AG04449 (cell line): ENCODE measurements at regions of chr1 and their contacts with region 1.

Region 1: GRCh38 chr1:170967042-170967910 is 31.9 kb downstream of the MROH9 start:
- DNase-seq: peak; percentile 14
- H3K4me3 ChIP-seq: no peak overlapping the region
- CTCF ChIP-seq: peak; percentile 49

Region 2: DNA sequence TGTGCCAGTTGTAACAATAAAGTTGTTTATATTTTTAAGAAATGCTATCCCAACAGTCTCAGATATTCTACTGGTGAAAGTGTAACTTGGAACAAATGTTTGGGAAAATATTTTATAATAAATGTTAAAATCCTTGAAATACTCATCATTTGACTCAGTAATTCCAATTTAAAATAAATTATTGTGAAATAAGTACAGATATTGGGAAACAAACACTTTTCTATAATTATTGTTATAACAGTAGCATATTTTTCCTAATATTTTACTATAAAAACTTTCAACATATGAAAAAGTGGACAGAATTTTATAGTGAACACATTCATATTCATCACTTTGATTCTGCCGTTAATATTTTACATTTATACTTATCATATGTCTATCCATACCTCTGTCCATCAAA is 104.6 kb before region 1 on chr1:
- CTCF ChIA-PET with region 1: no interaction called
- POLR2A ChIA-PET with region 1: no interaction called
- DNase-seq: no peak
- H3K4me3 ChIP-seq: no peak overlapping the region
- CTCF ChIP-seq: no peak

Region 3: GRCh38 chr1:170939476-170939875 is 27.8 kb before region 1 on chr1:
- CTCF ChIA-PET with region 1: interaction called, 10 read pairs
- POLR2A ChIA-PET with region 1: no interaction called
- DNase-seq: no peak
- H3K4me3 ChIP-seq: no peak overlapping the region
- CTCF ChIP-seq: no peak

Region 4: GRCh38 chr1:170978371-170978910 is 11.2 kb after region 1 on chr1:
- CTCF ChIA-PET with region 1: interaction called, 17 read pairs
- POLR2A ChIA-PET with region 1: no interaction called
- DNase-seq: no peak
- H3K4me3 ChIP-seq: no peak overlapping the region
- CTCF ChIP-seq: no peak

Region 5: DNA sequence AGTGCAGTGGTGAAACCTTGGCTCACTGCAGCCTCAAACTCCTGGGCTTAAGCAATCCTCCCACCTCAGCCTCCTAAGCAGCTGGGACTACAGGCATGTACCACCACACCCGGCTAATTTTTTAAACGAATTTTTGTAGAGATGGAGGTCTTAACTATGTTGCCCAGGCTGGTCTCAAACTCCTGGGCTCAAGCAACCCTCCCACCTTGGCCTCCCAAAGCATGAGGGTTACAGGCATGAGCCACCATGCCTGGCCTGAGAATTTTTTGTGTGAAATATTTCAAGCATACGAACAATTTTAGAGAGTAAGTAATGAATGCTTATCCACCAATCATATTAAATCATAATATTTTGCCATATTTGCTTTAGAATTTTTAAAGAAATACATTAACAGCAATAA is 19.6 kb after region 1 on chr1:
- CTCF ChIA-PET with region 1: interaction called, 25 read pairs
- POLR2A ChIA-PET with region 1: no interaction called
- DNase-seq: no peak
- H3K4me3 ChIP-seq: no peak overlapping the region
- CTCF ChIP-seq: no peak

Region 6: DNA sequence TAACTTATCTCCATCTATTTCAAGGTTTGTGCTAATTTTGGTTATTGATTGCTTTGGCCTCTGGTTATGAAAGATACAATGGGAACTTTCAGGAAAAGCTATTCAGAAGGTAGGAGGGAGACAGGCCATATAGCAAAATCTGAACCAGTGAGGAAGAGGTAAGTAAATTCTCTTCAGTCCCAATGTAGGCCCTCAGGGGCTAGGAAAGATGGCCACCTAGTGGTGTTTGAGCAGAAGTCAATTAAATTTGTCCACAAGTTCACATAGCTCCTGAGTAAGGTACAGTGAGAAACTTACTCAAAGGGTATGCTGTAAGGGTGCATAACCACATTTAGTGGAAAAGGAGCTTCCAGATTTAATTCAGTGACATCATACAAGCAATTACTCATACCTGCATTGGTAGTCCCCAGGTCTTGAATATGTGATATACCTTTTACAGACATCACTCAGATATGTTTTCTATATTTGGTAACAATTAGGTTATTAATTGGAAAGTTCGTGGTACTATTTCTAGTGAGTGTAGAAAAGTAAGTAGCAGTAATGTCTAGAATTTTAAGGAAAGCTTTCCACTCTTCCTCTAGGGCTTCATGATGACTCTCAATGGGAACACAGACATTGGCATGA is 259.6 kb after region 1 on chr1:
- CTCF ChIA-PET with region 1: interaction called, 160 read pairs
- POLR2A ChIA-PET with region 1: no interaction called
- DNase-seq: peak; percentile 21
- H3K4me3 ChIP-seq: no peak overlapping the region
- CTCF ChIP-seq: peak; percentile 70

Region 7: GRCh38 chr1:171313835-171314320 is 346.6 kb after region 1 on chr1 and contains the start of gene FMO4:
- CTCF ChIA-PET with region 1: interaction called, 39 read pairs
- POLR2A ChIA-PET with region 1: no interaction called
- DNase-seq: peak; percentile 95
- H3K4me3 ChIP-seq: peak within 1 kb of the TSS; percentile 24; the same call in 1 of the 2 replicates
- CTCF ChIP-seq: peak; percentile 60